Activated CD4-positive, alpha-beta memory T cell treated with anti-CD3 and anti-CD28 coated beads for 36 hours (primary cell): ENCODE measurements at regions of chr20 and their contacts with region 1.

Region 1: DNA sequence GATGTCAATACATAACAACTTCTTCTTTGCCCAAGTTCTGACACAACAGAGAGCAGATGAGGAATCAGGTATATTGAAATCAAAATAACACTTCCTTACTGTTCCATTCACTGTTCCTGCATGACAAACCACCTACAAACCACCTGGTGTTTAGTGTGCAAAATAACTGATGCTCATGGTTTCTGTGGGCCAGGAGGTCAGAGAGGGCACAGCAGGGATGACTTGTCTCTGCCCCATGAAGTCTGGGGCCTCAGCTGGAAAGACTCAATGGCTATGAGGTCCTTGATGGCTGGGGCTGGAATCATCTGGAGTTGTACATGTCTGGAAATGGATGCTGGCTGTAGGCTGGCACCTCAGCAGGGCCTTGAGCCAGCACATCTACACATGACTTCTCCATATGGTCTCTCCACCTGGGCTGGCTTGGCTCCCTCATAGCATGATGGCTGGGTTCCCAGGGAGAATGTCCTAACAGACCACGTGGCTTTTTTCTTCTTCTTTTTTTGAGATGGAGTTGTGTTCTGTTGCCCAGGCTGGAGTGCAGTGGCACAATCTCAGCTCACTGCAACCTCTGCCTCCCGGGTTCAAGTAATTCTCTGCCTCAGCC is 7.4 kb upstream of the COX4I2 start:
- DNase-seq: peak; percentile 25
- H3K4me3 Mint-ChIP-seq: no peak overlapping the region
- H3K27ac Mint-ChIP-seq: no peak overlapping the region
- H3K4me1 Mint-ChIP-seq: peaks cover 3% of the 10 kb centered on the region
- H3K27me3 Mint-ChIP-seq: no peaks in the 10 kb centered on the region

Region 2: GRCh38 chr20:31738729-31739561 is 108.7 kb after region 1 on chr20 and contains the start of gene TPX2:
- CTCF ChIA-PET with region 1: interaction called, 11 read pairs
- POLR2A ChIA-PET with region 1: no interaction called
- intact Hi-C with region 1: no loop called
- DNase-seq: peak; percentile 93
- H3K4me3 Mint-ChIP-seq: no peak within 1 kb of the TSS
- H3K27ac Mint-ChIP-seq: no peak within 1 kb of the TSS
- H3K4me1 Mint-ChIP-seq: peaks cover 5% of the 10 kb centered on the region
- H3K27me3 Mint-ChIP-seq: no peaks in the 10 kb centered on the region
- total RNA-seq, gene TPX2: 149 TPM